A673 (cell line): ENCODE measurements at regions of chr1 and their contacts with region 1.

Region 1: DNA sequence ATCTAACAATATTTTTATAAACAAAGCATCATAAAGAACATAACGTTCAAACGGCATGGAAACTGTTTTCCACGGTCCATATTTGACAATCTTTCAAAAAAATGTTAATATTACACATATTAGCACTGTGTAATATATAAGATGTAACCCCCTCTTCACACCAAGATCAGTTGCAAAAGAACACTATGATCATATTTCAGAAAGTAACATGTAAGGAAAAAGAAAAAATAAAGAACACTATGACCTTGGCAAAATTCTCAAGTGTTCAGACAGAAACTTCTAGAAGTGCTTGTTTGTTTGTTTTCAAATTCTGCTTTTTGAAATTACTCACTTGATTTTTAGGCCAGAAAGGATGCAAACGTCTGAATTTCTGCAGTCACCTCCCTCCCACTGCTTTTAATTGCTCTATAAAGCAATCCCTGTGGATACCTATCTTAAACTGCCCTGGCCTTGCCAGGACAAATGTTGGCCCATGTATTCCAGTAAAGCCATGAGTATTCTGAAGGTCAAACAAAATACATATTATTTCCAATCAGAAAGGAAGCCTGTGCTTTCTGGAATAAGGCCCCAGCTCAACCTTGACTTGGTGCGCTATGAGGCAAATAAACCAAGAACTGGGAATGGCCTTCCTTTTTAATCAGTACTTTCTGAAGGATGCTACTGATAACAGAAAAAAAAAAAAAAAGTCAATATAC is 68.6 kb downstream of the TGFBR3 start:
- DNase-seq: no peak
- H3K4me3 ChIP-seq: no peak overlapping the region
- H3K27ac ChIP-seq: no peak overlapping the region
- H3K4me1 ChIP-seq: peaks cover 20% of the 10 kb centered on the region
- H3K27me3 ChIP-seq: no peaks in the 10 kb centered on the region
- CTCF ChIP-seq: no peak

Region 2: DNA sequence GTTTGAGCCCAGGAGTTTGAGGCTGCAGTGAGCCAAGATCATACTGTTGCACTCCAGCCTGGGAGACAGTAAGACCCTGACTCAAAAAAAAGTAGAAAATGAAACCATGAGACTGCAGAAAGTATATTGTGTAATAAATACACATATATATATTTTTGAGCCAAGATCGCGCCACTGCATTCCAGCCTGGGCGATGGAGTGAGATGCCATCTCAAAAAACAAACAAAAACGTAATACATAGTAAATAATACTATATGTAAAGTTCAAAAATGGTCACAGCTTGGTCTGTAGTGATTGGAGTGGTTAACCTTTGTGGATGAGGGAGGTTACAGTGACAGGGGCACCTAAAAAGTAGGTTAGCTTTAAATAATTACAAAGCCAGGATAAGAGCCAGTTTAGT is 141.6 kb after region 1 on chr1:
- CTCF ChIA-PET with region 1: no interaction called
- POLR2A ChIA-PET with region 1: no interaction called
- intact Hi-C with region 1: no loop called
- DNase-seq: no peak
- H3K4me3 ChIP-seq: no peak overlapping the region
- H3K27ac ChIP-seq: no peak overlapping the region
- H3K4me1 ChIP-seq: no peaks in the 10 kb centered on the region
- H3K27me3 ChIP-seq: no peaks in the 10 kb centered on the region
- CTCF ChIP-seq: no peak

Region 3: GRCh38 chr1:92211166-92211565 is 393.8 kb after region 1 on chr1:
- CTCF ChIA-PET with region 1: interaction called, 18 read pairs
- POLR2A ChIA-PET with region 1: no interaction called
- intact Hi-C with region 1: no loop called
- DNase-seq: no peak
- H3K4me3 ChIP-seq: no peak overlapping the region
- H3K27ac ChIP-seq: no peak overlapping the region
- H3K4me1 ChIP-seq: no peaks in the 10 kb centered on the region
- H3K27me3 ChIP-seq: no peaks in the 10 kb centered on the region
- CTCF ChIP-seq: no peak